Dendritic cell treated with granulocyte-macrophage colony-stimulating factor and Interleukin-4, amounts not matched to agents 40 ng/mL and 50 ng/mL, for 4 days (primary cell): ENCODE measurements at regions of chr20 and their contacts with region 1.

Region 1: DNA sequence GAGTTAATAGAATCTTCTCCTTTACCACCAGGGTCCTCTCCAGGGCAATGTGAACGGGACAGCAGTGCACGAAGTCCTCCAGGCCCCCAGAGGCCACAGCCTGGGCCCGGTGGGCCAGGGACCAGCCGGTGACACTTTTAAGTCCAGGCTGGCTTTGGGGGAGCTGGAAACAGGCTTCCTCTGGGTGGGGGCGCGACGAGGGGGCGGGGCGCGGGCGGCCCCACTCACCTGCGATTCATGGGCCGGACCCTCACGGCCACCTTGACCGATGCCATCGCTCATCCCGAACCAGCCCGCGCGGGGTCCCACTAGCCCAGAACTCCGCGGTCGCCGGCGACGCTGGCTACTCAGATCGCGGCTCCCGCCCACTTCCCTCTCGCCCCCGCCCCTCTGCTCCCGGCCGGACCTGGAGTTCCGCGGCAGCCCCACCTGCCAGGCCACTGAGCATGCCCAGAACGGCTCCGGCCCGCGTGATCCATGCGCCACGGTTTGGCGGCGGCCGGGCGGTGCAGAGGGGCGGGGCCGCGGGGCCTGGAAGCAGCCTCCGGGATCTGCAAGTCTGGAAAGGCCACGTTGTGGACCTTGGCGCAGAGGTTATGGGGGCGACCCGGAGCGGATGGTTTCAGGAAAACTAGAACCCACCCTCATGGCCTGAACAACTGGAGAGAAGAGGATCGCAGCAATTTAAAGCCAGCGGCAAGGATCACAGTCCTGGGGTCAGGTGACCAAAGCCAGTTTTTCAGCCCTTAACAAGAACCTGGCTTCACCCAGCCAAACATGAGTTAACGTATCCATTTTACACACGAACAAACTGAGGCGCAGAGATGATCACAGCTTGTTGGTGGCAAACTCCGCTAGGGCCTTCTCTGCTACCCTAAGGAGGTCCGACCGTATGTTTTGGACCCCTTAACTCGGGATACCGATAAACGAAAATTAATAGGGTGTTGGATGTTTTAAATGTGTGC is at the start of gene KIF16B:
- H3K4me3 Mint-ChIP-seq: peak within 1 kb of the TSS; percentile 88
- H3K27ac Mint-ChIP-seq: peak within 1 kb of the TSS; percentile 90
- H3K4me1 Mint-ChIP-seq: peaks cover 55% of the 10 kb centered on the region
- H3K27me3 Mint-ChIP-seq: peaks cover 1% of the 10 kb centered on the region

Region 2: DNA sequence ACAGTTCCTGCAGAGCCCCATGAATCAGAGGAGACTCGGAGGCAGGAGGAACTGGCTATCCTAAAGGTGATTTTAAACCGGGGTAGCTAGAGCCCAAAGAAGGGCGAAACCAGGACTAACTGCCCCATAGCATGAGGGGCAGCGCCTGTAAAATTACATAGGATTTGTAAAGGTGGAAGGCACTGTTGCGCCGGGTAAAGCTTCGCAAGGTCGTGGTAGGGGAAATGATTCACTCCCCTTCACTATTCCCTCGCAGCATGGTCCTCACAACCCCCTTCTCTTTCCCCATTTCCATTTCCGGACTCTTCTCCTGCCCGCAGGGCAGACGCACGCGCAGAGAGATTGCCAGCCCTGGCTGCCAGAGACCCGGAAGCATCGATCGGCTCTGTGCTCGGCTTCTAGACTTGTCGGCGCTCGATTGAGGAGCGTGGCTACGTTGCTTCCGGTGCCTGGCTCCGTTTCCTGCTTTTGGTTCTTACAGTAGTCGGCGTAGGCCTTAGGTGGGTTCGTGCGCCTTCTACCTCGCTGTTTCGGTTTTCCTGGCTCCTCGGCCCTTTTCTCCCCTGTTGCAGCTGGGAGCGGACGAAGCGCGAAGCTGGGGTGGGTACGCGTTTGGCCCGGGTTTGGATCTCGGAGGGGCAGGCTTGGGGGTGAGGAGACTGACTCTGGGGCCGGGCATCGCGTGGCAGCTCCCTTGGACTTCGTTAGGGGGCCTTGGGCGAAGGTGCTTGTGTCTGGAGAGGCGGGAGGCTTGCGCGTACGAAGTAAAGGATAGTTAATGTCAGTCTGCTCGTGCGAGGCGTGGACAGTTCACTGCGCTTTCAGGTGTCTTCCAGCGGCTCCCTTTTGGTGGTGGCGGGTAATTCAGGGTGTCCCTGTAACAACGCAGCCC is 156.5 kb after region 1 on chr20 and contains the start of gene SNRPB2:
- intact Hi-C with region 1: loop called (anchors 1 kb)
- H3K4me3 Mint-ChIP-seq: peak within 1 kb of the TSS; percentile 97
- H3K27ac Mint-ChIP-seq: peak within 1 kb of the TSS; percentile 99
- H3K4me1 Mint-ChIP-seq: peaks cover 26% of the 10 kb centered on the region
- H3K27me3 Mint-ChIP-seq: peaks cover 36% of the 10 kb centered on the region